Activated CD4-positive, alpha-beta memory T cell treated with anti-CD3 and anti-CD28 coated beads for 36 hours (primary cell): ENCODE measurements at regions of chr1 and their contacts with region 1.

Region 1: DNA sequence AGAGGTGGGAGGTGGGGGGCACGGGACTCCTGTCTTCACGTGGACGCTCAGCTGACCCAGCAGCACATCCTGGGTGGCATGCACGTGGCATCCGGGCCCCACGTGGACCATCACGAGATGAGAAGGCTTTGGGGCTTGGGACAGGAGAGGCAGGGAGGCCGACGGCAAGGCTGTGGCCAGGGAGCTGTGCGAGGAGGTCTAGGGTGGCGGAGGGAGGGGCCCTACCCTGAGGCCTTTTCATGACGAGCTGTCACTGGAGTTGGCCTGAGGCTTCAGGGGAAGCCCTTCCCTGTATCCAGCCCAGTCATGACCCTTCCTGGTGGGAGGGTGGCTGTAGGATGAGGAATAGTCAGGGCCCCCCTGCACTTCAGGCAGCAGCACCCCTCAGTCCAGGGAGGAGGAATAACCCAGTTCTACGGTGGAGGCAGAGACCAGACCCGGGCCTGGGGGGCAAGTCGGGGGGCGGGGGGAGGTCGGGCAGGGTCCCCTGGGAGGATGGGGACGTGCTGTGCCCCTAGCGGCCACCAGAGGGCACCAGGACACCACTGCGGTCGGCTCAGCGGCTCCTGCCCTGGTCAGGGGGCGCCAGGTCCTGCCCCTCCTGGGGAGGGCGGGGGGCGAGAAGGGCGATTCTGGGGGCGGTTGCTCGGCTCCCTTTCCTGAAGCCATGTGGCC is 2.0 kb upstream of the PERM1 start:
- DNase-seq: peak; percentile 73
- H3K4me3 Mint-ChIP-seq: no peak overlapping the region
- H3K27ac Mint-ChIP-seq: no peak overlapping the region
- H3K4me1 Mint-ChIP-seq: peaks cover 5% of the 10 kb centered on the region
- H3K27me3 Mint-ChIP-seq: peaks cover 25% of the 10 kb centered on the region

Region 2: DNA sequence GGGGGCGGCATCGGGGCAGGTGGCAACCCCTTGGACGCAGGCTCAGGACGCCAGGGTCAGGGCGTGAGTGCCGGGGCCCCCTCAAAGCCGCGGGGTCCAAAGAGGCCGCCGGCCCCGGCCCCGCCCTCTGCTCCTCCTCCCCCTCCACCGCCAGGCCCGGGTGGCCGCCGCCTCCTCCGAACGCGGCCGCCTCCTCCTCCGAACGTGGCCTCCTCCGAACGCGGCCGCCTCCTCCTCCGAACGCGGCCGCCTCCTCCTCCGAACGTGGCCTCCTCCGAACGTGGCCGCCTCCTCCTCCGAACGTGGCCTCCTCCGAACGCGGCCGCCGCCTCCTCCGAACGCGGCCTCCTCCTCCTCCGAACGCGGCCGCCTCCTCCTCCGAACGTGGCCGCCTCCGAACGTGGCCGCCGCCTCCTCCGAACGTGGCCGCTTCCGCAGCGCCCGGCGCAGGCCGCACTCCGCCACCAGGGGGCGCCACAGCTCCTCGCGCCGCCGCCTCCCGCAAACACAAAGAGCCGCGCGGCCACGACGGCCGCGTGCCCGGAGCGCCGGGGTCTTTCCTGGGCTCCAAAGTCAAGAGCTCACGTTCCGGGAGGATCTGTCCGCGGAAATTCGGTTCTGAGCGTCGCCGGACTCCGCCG is 79.5 kb before region 1 on chr1:
- CTCF ChIA-PET with region 1: interaction called, 10 read pairs
- POLR2A ChIA-PET with region 1: no interaction called
- intact Hi-C with region 1: no loop called
- DNase-seq: peak; percentile 89
- H3K4me3 Mint-ChIP-seq: peak overlapping the region; percentile 50
- H3K27ac Mint-ChIP-seq: no peak overlapping the region
- H3K4me1 Mint-ChIP-seq: peaks cover 7% of the 10 kb centered on the region
- H3K27me3 Mint-ChIP-seq: peaks cover 36% of the 10 kb centered on the region

Region 3: DNA sequence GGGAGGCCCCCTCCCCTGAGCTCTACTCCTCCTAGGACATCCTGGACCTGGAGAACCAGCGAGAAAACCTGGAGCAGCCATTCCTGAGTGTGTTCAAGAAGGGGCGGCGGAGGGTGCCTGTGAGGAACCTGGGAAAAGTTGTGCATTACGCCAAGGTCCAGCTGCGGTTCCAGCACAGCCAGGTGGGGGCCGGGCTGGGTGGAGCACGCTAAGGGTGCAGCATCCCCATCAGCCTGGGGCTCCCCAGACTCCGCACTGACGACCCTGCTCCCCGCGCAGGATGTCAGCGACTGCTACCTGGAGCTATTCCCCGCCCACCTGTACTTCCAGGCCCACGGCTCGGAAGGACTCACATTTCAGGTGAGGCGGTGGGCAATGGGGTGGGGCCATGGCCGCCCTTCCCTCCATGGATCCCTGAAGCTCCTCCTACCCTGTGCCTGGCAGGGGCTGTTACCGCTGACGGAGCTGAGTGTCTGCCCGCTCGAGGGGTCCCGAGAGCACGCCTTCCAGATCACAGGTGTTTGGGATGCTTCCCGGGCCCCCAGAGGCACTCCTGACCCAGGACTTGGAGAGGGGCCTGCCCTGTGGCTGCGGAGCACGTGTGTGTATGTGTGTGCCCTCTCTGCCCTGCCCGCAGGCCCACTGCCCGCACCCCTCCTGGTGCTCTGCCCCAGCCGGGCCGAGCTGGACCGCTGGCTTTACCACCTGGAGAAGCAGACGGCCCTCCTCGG is 13.5 kb before region 1 on chr1:
- CTCF ChIA-PET with region 1: interaction called, 10 read pairs
- POLR2A ChIA-PET with region 1: no interaction called
- intact Hi-C with region 1: no loop called
- DNase-seq: no peak
- H3K4me3 Mint-ChIP-seq: no peak overlapping the region
- H3K27ac Mint-ChIP-seq: no peak overlapping the region
- H3K4me1 Mint-ChIP-seq: peaks cover 7% of the 10 kb centered on the region
- H3K27me3 Mint-ChIP-seq: peaks cover 2% of the 10 kb centered on the region

Region 4: GRCh38 chr1:1001461-1002204 is 17.7 kb after region 1 on chr1:
- CTCF ChIA-PET with region 1: interaction called, 29 read pairs
- POLR2A ChIA-PET with region 1: interaction called, 3 read pairs
- intact Hi-C with region 1: no loop called
- DNase-seq: peak; percentile 77
- H3K4me3 Mint-ChIP-seq: no peak overlapping the region
- H3K27ac Mint-ChIP-seq: no peak overlapping the region
- H3K4me1 Mint-ChIP-seq: peaks cover 13% of the 10 kb centered on the region
- H3K27me3 Mint-ChIP-seq: peaks cover 37% of the 10 kb centered on the region

Region 5: DNA sequence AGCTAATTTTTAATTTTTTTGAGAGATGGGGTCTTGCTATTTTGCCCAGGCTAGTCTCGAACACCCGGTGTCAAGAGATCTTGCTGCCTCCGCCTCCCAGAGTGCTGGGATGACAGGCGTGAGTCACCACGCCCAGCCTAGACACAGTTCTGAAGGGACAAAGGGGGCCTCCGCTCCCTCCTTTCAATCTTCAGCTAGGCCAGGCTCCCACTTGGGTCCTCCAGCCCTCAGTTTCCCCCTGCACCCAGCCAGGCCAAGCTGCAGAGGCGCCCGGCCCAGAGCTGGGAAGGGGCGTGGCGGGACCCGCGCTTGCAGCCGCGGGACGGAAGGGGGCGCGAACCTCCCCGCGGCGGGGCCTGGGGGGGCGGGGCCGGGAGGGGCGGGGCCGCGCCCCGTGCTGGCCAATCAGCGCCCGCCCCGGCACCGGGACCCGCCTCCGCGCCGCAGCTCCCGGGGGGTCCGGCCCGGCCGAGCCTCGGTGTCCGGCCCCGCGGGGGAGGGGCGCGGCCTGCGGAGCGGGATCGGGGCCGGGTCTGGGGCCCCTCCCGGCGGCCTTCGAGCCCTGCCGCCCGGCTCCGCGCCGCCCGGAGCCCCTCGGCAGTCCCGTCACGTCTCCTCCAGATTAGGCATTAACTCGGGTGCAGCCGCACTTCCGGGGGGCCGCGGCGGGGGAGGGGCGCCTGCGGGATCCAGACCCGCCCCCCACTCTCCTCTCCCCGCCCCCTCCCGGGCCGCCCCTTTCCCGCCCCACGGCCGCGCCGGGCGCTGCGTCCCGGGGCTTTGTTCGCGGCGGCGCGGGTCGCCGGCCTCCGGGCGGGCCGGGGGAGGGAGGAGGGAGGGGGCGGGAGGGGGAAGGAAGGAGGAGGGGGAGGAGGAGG is 35.4 kb after region 1 on chr1:
- CTCF ChIA-PET with region 1: interaction called, 15 read pairs
- POLR2A ChIA-PET with region 1: no interaction called
- intact Hi-C with region 1: no loop called
- DNase-seq: peak; percentile 83
- H3K4me3 Mint-ChIP-seq: peak overlapping the region; percentile 62
- H3K27ac Mint-ChIP-seq: no peak overlapping the region
- H3K4me1 Mint-ChIP-seq: peaks cover 8% of the 10 kb centered on the region
- H3K27me3 Mint-ChIP-seq: peaks cover 9% of the 10 kb centered on the region

Region 6: GRCh38 chr1:1763657-1764616 is 780.0 kb after region 1 on chr1:
- CTCF ChIA-PET with region 1: no interaction called
- POLR2A ChIA-PET with region 1: no interaction called
- intact Hi-C with region 1: no loop called
- DNase-seq: no peak
- H3K4me3 Mint-ChIP-seq: no peak overlapping the region
- H3K27ac Mint-ChIP-seq: no peak overlapping the region
- H3K4me1 Mint-ChIP-seq: no peaks in the 10 kb centered on the region
- H3K27me3 Mint-ChIP-seq: no peaks in the 10 kb centered on the region